ENCODE measurements at regions of chr13 and their contacts with region 1.

Region 1: GRCh38 chr13:99087096-99087953 is 109.5 kb upstream of the DOCK9 start:
- DNase-seq: peak; percentile 84 to 96 (median 93)
- ATAC-seq: peak; percentile 74
- H3K4me3 ChIP-seq: peak overlapping the region; percentile 66 to 78
- H3K4me3 Mint-ChIP-seq: peak overlapping the region; percentile 94
- H3K27ac ChIP-seq: peak overlapping the region; percentile 85 to 93
- H3K27ac Mint-ChIP-seq: peak overlapping the region; percentile 99
- H3K4me1 ChIP-seq: peaks cover 43% of the 10 kb centered on the region
- H3K4me1 Mint-ChIP-seq: peaks cover 43% of the 10 kb centered on the region
- H3K27me3 ChIP-seq: no peaks in the 10 kb centered on the region
- H3K27me3 Mint-ChIP-seq: no peaks in the 10 kb centered on the region
- CTCF ChIP-seq: peak; percentile 46

Region 2: GRCh38 chr13:97975848-97976609 is 1111.3 kb before region 1 on chr13:
- CTCF ChIA-PET with region 1: no interaction called
- POLR2A ChIA-PET with region 1: interaction called, 3 read pairs
- intact Hi-C with region 1: loop called in 1 of 2 experiments (anchors 5 kb)
- DNase-seq: peak; percentile 77 to 95 (median 88)
- ATAC-seq: peak; percentile 92
- H3K4me3 ChIP-seq: peak overlapping the region; percentile 89 to 92
- H3K4me3 Mint-ChIP-seq: peak overlapping the region; percentile 94
- H3K27ac ChIP-seq: peak overlapping the region; percentile 73 to 82
- H3K27ac Mint-ChIP-seq: peak overlapping the region; percentile 93
- H3K4me1 ChIP-seq: peaks cover 21% of the 10 kb centered on the region
- H3K4me1 Mint-ChIP-seq: peaks cover 42% of the 10 kb centered on the region
- H3K27me3 ChIP-seq: no peaks in the 10 kb centered on the region
- H3K27me3 Mint-ChIP-seq: no peaks in the 10 kb centered on the region
- CTCF ChIP-seq: no peak

Region 3: DNA sequence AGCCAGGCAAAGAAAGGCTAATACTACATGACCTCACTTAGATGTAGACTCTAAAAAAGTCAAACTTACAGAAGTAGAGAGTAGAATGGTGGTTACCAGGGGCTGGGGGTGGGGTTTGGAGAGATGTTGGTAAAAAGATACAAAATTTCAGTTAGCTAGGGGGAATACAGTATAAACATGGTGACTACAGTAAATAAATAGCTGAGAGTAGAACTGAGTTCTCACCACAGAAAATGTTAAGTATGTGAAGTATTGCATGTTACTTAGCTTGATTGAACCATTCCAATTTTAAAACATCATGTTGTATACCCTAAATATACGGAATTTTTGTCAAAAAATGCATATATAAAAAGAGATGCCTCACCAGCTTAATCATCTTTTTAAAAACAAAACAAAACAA is 41.9 kb before region 1 on chr13:
- CTCF ChIA-PET with region 1: interaction called, 6 read pairs
- POLR2A ChIA-PET with region 1: interaction called, 43 read pairs
- intact Hi-C with region 1: loop called (anchors 1 kb)
- DNase-seq: peak in 1 of 9 experiments; percentile 32
- ATAC-seq: no peak
- H3K4me3 ChIP-seq: no peak overlapping the region
- H3K4me3 Mint-ChIP-seq: peak overlapping the region; percentile 75
- H3K27ac ChIP-seq: peak overlapping the region; percentile 49 to 64
- H3K27ac Mint-ChIP-seq: peak overlapping the region; percentile 91
- H3K4me1 ChIP-seq: peaks cover 87% of the 10 kb centered on the region
- H3K4me1 Mint-ChIP-seq: peaks cover 88% of the 10 kb centered on the region
- H3K27me3 ChIP-seq: no peaks in the 10 kb centered on the region
- H3K27me3 Mint-ChIP-seq: no peaks in the 10 kb centered on the region
- CTCF ChIP-seq: no peak

Region 4: DNA sequence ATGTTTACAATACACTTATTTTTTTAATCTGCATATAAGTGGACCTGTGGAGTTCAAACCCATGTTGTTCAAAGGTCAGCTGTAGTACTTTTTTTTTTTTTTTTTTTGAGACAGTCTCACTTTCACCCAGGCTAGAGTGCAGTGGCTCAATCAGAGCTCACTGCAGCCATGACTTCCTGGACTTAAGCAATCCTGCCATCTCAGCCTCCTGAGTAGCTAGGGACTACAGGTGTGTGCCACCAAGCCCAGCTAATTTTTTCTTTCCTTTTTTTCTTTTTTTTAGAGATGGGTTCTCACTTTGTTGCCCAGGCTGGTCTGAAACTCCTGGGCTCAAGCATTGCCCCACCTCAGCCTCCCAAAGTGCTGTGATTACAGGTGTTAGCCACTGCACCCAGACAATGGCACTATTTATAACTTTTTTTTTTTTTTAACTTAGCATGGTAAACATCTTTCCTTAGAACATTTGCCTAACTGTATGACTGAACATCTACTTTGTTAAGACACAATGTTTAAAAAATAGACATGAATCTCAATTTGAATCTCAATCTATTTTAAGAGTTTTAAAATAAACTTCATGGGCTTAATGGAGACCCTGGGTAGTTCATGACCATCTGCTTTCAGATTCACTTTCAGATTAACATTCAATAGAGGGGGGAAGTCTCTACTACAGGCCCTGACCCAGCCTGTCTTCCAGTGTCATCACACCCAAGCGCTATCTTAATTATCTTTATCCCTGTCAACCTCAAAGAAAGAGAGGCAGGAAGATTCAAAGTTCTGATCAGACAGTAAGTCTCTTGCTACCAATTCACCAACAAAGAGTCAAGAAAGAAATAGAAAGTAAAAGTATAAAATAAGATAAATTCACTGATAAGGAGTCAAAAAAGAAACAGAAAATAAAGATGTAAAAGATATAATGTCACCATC is 11.8 kb before region 1 on chr13:
- CTCF ChIA-PET with region 1: interaction called, 5 read pairs
- POLR2A ChIA-PET with region 1: interaction called, 5 read pairs
- intact Hi-C with region 1: loop called in 1 of 2 experiments (anchors 2 kb)
- DNase-seq: peak in 2 of 9 experiments; percentile 55 to 78
- ATAC-seq: peak; percentile 84
- H3K4me3 ChIP-seq: no peak overlapping the region
- H3K4me3 Mint-ChIP-seq: peak overlapping the region; percentile 68
- H3K27ac ChIP-seq: peak overlapping the region; percentile 26 to 76
- H3K27ac Mint-ChIP-seq: peak overlapping the region; percentile 92
- H3K4me1 ChIP-seq: peaks cover 47% of the 10 kb centered on the region
- H3K4me1 Mint-ChIP-seq: peaks cover 81% of the 10 kb centered on the region
- H3K27me3 ChIP-seq: no peaks in the 10 kb centered on the region
- H3K27me3 Mint-ChIP-seq: no peaks in the 10 kb centered on the region
- CTCF ChIP-seq: no peak

Region 5: DNA sequence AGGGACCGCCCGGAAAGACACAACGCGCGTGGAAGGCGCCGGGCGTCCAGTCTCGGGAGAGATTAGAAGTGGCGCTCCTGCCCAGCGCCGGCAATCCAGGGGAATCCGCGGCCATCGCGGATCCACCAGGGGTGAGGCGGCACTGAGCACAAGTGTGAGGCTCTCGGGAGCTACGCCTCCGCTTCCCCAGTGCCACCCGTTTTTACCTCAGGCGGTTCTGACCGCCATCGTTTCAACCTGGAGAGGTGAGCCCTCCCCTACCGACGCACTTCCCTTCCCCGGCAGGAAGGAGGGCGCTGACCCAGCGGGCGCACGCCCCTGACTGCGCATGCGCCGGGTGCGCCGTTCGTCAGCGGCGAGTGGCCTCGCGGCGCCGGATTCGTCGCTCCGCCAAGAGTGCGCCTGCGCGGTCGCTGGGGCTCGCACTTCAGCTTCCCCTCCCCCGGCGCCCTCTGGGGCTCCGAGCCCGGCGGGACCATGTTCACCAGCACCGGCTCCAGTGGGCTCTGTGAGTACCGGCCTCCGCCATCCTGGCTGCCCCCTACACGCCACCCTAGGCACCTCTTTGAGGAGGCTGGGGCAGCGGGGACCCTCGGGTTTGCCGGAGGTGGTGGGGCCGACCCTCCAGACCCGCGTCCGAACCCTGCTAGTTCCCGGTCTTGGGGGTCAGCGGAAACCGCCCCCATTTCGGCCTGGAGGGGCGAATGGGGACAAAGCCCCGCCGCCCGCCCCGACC is 113.3 kb after region 1 on chr13 and contains the start of gene UBAC2:
- CTCF ChIA-PET with region 1: interaction called, 3 read pairs
- POLR2A ChIA-PET with region 1: interaction called, 11 read pairs
- intact Hi-C with region 1: loop called (anchors 5 kb)
- DNase-seq: peak; percentile 93 to 99 (median 97)
- ATAC-seq: peak; percentile 77
- H3K4me3 ChIP-seq: peak within 1 kb of the TSS; percentile 77 to 90
- H3K4me3 Mint-ChIP-seq: peak within 1 kb of the TSS; percentile 90
- H3K27ac ChIP-seq: peak within 1 kb of the TSS; percentile 98 to 99
- H3K27ac Mint-ChIP-seq: peak within 1 kb of the TSS; percentile 94
- H3K4me1 ChIP-seq: peaks cover 53% of the 10 kb centered on the region
- H3K4me1 Mint-ChIP-seq: peaks cover 69% of the 10 kb centered on the region
- H3K27me3 ChIP-seq: no peaks in the 10 kb centered on the region
- H3K27me3 Mint-ChIP-seq: no peaks in the 10 kb centered on the region
- CTCF ChIP-seq: no peak
- total RNA-seq, gene UBAC2: 62.0 to 63.0 TPM

Region 6: GRCh38 chr13:99495478-99496183 is 408.3 kb after region 1 on chr13:
- CTCF ChIA-PET with region 1: no interaction called
- POLR2A ChIA-PET with region 1: interaction called, 3 read pairs
- intact Hi-C with region 1: loop called in 1 of 2 experiments (anchors 2 kb)
- DNase-seq: peak in 1 of 9 experiments; percentile 12
- ATAC-seq: no peak
- H3K4me3 ChIP-seq: peak overlapping the region; percentile 57 to 63
- H3K4me3 Mint-ChIP-seq: peak overlapping the region; percentile 88
- H3K27ac ChIP-seq: peak overlapping the region; percentile 53 to 79
- H3K27ac Mint-ChIP-seq: peak overlapping the region; percentile 94
- H3K4me1 ChIP-seq: peaks cover 43% of the 10 kb centered on the region
- H3K4me1 Mint-ChIP-seq: peaks cover 52% of the 10 kb centered on the region
- H3K27me3 ChIP-seq: no peaks in the 10 kb centered on the region
- H3K27me3 Mint-ChIP-seq: no peaks in the 10 kb centered on the region
- CTCF ChIP-seq: no peak

Region 7: GRCh38 chr13:100674848-100675660 is 1587.7 kb after region 1 on chr13:
- CTCF ChIA-PET with region 1: no interaction called
- POLR2A ChIA-PET with region 1: no interaction called
- intact Hi-C with region 1: loop called in 1 of 2 experiments (anchors 10 kb)
- DNase-seq: peak; percentile 99 to 100 (median 100)
- ATAC-seq: peak; percentile 92
- H3K4me3 ChIP-seq: peak overlapping the region; percentile 88 to 98
- H3K4me3 Mint-ChIP-seq: peak overlapping the region; percentile 95
- H3K27ac ChIP-seq: peak overlapping the region; percentile 55 to 78
- H3K27ac Mint-ChIP-seq: peak overlapping the region; percentile 89
- H3K4me1 ChIP-seq: peaks cover 14% of the 10 kb centered on the region
- H3K4me1 Mint-ChIP-seq: peaks cover 29% of the 10 kb centered on the region
- H3K27me3 ChIP-seq: no peaks in the 10 kb centered on the region
- H3K27me3 Mint-ChIP-seq: no peaks in the 10 kb centered on the region
- CTCF ChIP-seq: no peak

Measured in CD8-positive, alpha-beta T cell (primary cell).